ENCODE measurements at regions of chr15 and their contacts with region 1.

Region 1: GRCh38 chr15:51982013-51982769 is 10.6 kb upstream of the LEO1 start:
- DNase-seq: peak in 2 of 4 experiments; percentile 57 to 67
- ATAC-seq: peak; percentile 93
- H3K4me3 ChIP-seq: no peak overlapping the region
- H3K27ac ChIP-seq: peak overlapping the region; percentile 65
- H3K4me1 ChIP-seq: peaks cover 8 to 12% of the 10 kb centered on the region in 2 experiments
- H3K27me3 ChIP-seq: no peaks in the 10 kb centered on the region
- CTCF ChIP-seq: peak; percentile 52 to 85 (median 66); a peak in 5 of 6 replicates
- EP300 ChIP-seq: peak; percentile 64
- POLR2A ChIP-seq: no peak; the same call in 1 of the 2 replicates
- RAD21 ChIP-seq: peak; percentile 87 to 94

Region 2: DNA sequence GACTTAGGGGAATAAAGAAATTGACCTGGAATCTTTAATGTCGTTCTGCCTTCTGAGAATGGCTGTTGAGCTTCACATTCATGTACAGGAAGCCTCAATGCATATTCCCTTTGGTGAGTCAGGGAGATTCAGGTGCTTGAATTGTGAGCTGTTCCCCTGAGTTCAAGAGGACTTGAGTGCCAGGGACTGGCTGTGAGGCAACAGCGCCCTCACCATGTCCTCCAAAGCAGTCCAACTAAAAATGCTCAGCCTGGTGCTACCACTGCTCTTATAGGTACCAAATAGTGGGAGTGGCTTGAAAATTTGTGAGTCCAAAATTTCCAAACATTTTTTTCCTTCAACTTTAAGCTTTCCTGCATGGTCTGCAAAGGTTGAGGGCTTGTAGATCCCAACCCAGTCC is 64.7 kb before region 1 on chr15:
- CTCF ChIA-PET with region 1: no interaction called
- POLR2A ChIA-PET with region 1: no interaction called
- in situ Hi-C with region 1: no loop called
- intact Hi-C with region 1: no loop called
- DNase-seq: peak; percentile 17 to 59 (median 30)
- ATAC-seq: peak; percentile 96
- H3K4me3 ChIP-seq: no peak overlapping the region
- H3K27ac ChIP-seq: no peak overlapping the region
- H3K4me1 ChIP-seq: no peaks in the 10 kb centered on the region
- H3K27me3 ChIP-seq: no peaks in the 10 kb centered on the region
- CTCF ChIP-seq: peak; percentile 65 to 70 (median 70)
- EP300 ChIP-seq: no peak
- POLR2A ChIP-seq: no peak
- RAD21 ChIP-seq: peak in 1 of 2 experiments; percentile 69; a peak in 3 of 4 replicates

Region 3: DNA sequence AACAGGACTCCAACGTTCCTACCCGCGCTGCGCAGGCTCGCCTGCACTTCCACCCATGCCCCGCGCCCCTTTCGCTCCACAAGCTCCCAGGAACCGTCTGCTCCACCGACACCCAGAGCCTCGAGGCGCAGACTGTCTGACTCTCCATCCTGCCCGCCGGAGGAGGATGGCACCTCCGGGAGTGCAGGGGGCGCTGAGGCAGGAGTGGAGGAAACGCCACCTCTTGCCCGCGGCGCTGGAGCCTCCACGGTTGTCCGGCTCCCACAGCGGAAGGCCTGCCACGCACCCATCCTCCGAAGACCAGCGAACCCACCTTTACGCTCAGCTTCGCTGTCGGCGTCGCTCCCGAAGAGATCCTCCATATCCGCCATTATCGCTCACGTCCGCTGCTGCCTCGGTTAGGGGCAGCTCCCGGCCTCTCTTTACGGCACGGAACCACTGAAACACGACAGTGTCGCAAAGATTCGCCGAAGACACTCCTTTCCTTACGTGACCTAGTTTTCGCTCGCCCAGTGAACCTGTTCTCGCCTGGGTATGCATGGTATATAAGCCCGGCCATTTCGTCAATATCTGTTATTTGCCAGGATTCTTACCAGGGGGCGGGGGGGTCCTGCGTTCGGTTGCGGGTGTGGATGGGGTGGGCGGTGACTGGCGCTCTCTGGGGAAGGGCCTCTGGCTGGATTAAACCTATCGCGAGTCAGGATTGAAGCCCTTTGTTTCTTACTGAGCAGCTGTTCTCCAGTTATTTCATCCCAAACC is 10.6 kb before region 1 on chr15 and contains the start of gene LEO1:
- CTCF ChIA-PET with region 1: no interaction called
- POLR2A ChIA-PET with region 1: interaction called, 32 read pairs
- in situ Hi-C with region 1: no loop called
- intact Hi-C with region 1: no loop called
- DNase-seq: peak; percentile 90 to 96 (median 90)
- ATAC-seq: peak; percentile 93
- H3K4me3 ChIP-seq: peak within 1 kb of the TSS; percentile 77
- H3K27ac ChIP-seq: peak within 1 kb of the TSS; percentile 86
- H3K4me1 ChIP-seq: peaks cover 3 to 17% of the 10 kb centered on the region in 2 experiments; a peak in 3 of 5 replicates
- H3K27me3 ChIP-seq: no peaks in the 10 kb centered on the region
- CTCF ChIP-seq: peak; percentile 25 to 34 (median 28); a peak in 3 of 6 replicates
- EP300 ChIP-seq: no peak
- POLR2A ChIP-seq: peak; percentile 96
- RAD21 ChIP-seq: peak in 1 of 2 experiments; percentile 27; a peak in 2 of 4 replicates
- polyA plus RNA-seq, gene LEO1: 26.0 to 38.7 TPM

Region 4: GRCh38 chr15:52019388-52020220 is 37.4 kb after region 1 on chr15:
- CTCF ChIA-PET with region 1: no interaction called
- POLR2A ChIA-PET with region 1: interaction called, 5 read pairs
- in situ Hi-C with region 1: no loop called
- intact Hi-C with region 1: loop called (anchors 2 kb)
- DNase-seq: peak; percentile 85 to 89 (median 86)
- ATAC-seq: peak; percentile 80
- H3K4me3 ChIP-seq: peak overlapping the region; percentile 78
- H3K27ac ChIP-seq: peak overlapping the region; percentile 97
- H3K4me1 ChIP-seq: peaks cover 10 to 30% of the 10 kb centered on the region in 2 experiments; a peak in 4 of 5 replicates
- H3K27me3 ChIP-seq: no peaks in the 10 kb centered on the region
- CTCF ChIP-seq: no peak
- EP300 ChIP-seq: no peak; the same call in 1 of the 2 replicates
- POLR2A ChIP-seq: peak; percentile 67
- RAD21 ChIP-seq: peak in 1 of 2 experiments; percentile 19; a peak in 1 of 4 replicates

Region 5: GRCh38 chr15:52139599-52140491 is 157.7 kb after region 1 on chr15:
- CTCF ChIA-PET with region 1: interaction called, 9 read pairs
- POLR2A ChIA-PET with region 1: no interaction called
- in situ Hi-C with region 1: no loop called
- intact Hi-C with region 1: loop called (anchors 1 kb)
- DNase-seq: peak; percentile 71 to 88 (median 74)
- ATAC-seq: peak; percentile 87
- H3K4me3 ChIP-seq: no peak overlapping the region
- H3K27ac ChIP-seq: no peak overlapping the region
- H3K4me1 ChIP-seq: peaks cover 9 to 31% of the 10 kb centered on the region in 2 experiments; a peak in 4 of 5 replicates
- H3K27me3 ChIP-seq: no peaks in the 10 kb centered on the region
- CTCF ChIP-seq: peak; percentile 90 to 95 (median 91)
- EP300 ChIP-seq: no peak
- POLR2A ChIP-seq: no peak
- RAD21 ChIP-seq: peak; percentile 76 to 86

Region 6: DNA sequence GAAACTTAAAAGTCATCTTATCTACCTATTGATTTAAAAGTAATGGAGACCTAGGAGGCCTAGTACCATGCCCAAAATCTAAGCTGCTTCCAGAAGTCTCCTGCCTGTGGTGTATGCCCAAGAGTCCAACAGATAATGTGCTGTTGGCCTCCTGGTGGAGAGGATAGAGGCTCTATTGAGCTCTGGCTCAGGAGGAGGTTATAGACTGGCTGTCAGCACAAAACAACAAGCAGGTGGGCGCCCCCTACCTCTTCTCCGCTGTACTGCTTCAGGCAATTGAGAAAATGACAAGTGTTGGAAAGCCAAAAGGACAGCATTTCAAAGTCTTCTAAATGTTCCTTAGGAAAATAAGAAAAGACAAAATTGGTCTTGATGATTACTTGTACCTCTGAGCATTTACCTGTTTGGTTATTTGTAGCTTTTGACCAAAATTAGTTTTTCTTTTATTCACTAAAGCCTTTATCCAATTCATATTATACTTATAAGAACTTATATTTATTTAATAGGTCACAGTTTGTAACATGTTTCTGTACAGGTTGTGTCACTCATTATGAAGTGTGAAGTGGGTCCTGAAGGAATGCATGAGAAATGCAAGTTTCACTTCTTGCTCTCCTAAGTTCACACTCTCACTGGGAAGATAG is 226.2 kb after region 1 on chr15:
- CTCF ChIA-PET with region 1: no interaction called
- POLR2A ChIA-PET with region 1: no interaction called
- in situ Hi-C with region 1: no loop called
- intact Hi-C with region 1: loop called (anchors 1 kb)
- DNase-seq: peak; percentile 65 to 78 (median 70)
- ATAC-seq: peak; percentile 99
- H3K4me3 ChIP-seq: no peak overlapping the region
- H3K27ac ChIP-seq: no peak overlapping the region
- H3K4me1 ChIP-seq: no peaks in the 10 kb centered on the region
- H3K27me3 ChIP-seq: peaks cover 7 to 23% of the 10 kb centered on the region in 2 experiments; a peak in 3 of 5 replicates
- CTCF ChIP-seq: peak; percentile 90 to 96 (median 93)
- EP300 ChIP-seq: no peak
- POLR2A ChIP-seq: no peak
- RAD21 ChIP-seq: peak; percentile 60 to 76

Measured in K562 (cell line).